Dorsolateral prefrontal cortex (tissue), 120 donors: ENCODE measurements at regions of chr17 and their contacts with region 1.

Region 1: GRCh38 chr17:68909066-68909465 is 46.1 kb downstream of the ABCA8 start:
- DNase-seq: no peak
- H3K4me3 ChIP-seq: no peak overlapping the region
- H3K27ac ChIP-seq: peak overlapping the region in 58 of 59 donors; percentile 21 to 98 (median 92)
- H3K27me3 ChIP-seq: no peaks in the 10 kb centered on the region
- CTCF ChIP-seq: no peak

Region 2: DNA sequence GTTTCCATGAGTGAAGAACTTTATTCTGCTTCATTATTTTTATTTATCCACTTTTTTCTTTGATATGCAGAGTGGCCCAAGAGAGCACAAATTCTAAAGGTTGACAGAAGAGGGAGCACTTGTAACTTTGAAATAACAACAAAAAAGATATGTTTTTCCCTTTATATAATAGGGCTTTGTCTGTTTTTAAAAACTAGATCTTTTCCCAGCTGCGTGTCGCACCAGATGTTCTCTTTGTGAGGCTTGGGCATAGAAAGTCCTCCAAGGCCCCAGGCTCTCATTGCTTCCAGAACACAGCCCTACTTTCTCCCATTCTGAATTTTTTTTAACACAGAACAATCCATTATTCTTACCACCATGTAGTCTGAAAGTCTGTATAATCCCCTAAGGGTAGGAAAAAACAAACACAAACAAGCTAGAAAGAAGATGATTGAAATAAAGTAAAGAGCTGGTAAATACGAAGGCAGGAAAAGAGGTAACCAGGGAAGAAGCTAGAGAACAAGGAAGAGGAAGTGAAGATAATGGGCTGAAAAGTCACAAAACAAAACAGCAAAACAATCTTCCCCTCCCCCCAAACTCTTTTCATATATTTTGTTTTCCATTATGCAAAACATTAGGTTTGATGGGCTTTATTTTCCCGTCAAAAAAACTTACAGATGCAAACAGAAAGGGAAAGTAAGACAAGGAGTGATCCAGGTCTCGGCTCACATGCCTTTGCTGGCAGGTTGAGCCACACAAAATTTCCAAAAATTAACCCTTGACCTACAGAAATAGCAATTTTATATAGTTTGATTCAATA is 114.2 kb before region 1 on chr17:
- intact Hi-C with region 1: loop called (anchors 1 to 2 kb)
- DNase-seq: peak in 9 of 10 donors; percentile 42 to 86 (median 73)
- H3K4me3 ChIP-seq: peak overlapping the region in 49 of 59 donors; percentile 0 to 54 (median 27)
- H3K27ac ChIP-seq: peak overlapping the region; percentile 70 to 100 (median 98)
- H3K27me3 ChIP-seq: peaks cover 0 to 5% (median 0%) of the 10 kb centered on the region in 45 donors
- CTCF ChIP-seq: peak; percentile 53 to 84 (median 70)

Region 3: DNA sequence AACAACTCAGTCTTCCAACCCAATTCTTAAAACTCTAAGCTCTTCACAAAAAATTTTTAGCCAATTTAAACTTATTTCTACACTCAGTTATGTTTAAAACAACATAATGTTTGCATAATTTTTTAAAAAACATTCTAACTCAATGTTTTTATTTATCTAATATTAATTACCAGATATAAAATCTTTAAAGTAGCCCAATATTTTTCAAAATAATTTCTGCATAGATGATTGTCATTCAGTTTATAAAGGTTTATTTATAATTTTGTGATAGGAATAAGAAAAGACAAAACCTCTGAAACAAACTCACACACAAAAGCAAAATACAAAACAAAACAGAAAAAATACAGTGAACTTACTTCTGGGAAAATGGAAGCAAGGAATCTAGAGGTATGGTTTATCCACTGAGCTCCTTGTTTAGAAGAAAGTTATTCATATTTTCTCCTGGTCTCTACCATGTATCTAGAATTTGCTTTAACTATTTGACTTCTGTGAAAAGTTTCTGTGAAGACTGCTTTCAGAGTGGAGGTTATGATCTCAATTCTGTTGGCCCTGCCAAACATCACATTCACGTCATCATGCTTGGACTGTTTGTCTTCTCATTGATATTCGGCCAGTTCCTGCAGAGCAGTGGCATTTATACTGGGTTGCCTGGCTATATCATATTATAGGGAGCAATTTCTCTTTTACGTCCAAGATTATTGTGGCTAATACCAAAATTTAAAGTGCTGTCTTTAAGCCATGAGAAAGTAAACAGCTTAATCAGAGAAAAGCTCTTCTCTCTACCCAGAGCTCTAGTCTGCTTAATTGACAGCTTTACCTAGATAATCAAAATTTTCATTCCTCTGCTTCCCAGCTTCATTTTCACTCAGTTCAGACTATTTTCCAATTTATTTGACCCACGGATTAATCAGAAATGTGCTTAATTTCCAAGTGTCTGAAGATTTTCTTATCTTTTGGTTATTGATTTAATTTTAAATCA is 46.1 kb after region 1 on chr17 and contains the start of gene ABCA8:
- intact Hi-C with region 1: loop called (anchors 2 to 5 kb)
- DNase-seq: peak in 5 of 10 donors; percentile 43 to 73 (median 47)
- H3K4me3 ChIP-seq: peak within 1 kb of the TSS; percentile 4 to 75 (median 52)
- H3K27ac ChIP-seq: peak within 1 kb of the TSS; percentile 3 to 97 (median 84)
- H3K27me3 ChIP-seq: no peaks in the 10 kb centered on the region
- CTCF ChIP-seq: peak in 6 of 56 donors; percentile 3 to 33 (median 27)
- total RNA-seq, gene ABCA8: 12.2 to 285 (median 71.5) TPM

Region 4: DNA sequence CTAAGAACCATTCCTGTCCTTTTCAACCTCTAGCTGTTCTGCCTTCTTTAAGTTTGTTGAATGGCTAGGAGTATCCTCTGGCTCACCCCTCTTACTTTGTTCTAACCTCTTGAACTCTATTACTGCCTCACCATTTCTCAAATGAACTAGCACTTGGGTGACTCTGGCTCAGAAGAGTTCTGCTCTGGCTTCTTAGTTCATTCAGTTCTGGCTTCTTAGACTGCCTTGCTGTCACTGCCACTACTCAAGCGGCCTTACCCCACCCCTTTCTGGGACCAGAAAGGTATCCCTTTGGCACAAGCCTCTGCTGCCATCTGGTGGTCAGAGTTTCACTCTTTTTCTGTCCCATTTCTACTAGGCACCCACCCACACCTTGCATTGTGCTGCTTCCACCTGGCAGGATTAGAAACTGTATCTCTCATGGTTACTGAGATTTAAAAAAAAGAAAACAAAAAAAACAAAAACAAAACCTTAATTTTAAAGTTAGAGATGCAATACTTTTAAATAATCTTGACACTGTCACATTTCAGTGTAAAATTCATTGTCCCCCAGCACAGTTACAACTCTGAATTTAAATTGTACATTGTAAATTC is 326.4 kb after region 1 on chr17:
- intact Hi-C with region 1: loop called in 1 of 2 experiments (anchors 10 kb)
- DNase-seq: peak; percentile 32 to 84 (median 72)
- H3K4me3 ChIP-seq: no peak overlapping the region
- H3K27ac ChIP-seq: peak overlapping the region in 20 of 59 donors; percentile 2 to 70 (median 27)
- H3K27me3 ChIP-seq: no peaks in the 10 kb centered on the region
- CTCF ChIP-seq: peak; percentile 75 to 98 (median 88)